Common myeloid progenitor, CD34-positive (primary cell): ENCODE measurements at regions of chr7 and their contacts with region 1.

Region 1: DNA sequence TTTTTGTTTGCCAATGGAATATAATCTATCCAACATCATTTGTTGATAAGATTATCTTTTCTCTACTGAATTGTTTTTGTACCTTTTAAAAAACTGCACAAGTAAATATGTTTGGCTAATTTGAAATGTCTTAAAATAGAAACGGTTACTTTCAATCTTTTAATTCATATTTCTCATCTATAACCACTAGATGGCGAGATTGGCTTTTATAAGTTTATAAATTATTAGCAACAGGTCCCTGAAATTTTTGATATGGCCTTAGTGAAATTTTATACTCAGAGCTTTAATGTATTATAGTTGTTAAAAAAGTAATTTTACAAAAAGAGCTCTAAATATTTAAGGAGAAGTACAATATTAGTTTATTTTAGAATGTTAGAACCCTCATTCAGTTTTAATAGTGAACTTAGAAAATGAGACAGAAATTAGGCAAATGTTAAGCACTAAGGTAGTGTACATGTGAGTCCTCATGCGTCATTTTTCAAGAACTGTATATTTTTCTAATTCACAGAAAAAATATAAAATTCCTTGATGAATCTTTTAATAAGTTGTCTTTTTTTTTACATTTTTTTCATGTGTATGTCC is 592.5 kb downstream of the ARL4A start:
- DNase-seq: peak; percentile 17 to 56 (median 51)
- H3K4me3 ChIP-seq: no peak overlapping the region
- H3K27ac ChIP-seq: no peak overlapping the region
- H3K4me1 ChIP-seq: no peaks in the 10 kb centered on the region
- H3K27me3 ChIP-seq: no peaks in the 10 kb centered on the region

Region 2: DNA sequence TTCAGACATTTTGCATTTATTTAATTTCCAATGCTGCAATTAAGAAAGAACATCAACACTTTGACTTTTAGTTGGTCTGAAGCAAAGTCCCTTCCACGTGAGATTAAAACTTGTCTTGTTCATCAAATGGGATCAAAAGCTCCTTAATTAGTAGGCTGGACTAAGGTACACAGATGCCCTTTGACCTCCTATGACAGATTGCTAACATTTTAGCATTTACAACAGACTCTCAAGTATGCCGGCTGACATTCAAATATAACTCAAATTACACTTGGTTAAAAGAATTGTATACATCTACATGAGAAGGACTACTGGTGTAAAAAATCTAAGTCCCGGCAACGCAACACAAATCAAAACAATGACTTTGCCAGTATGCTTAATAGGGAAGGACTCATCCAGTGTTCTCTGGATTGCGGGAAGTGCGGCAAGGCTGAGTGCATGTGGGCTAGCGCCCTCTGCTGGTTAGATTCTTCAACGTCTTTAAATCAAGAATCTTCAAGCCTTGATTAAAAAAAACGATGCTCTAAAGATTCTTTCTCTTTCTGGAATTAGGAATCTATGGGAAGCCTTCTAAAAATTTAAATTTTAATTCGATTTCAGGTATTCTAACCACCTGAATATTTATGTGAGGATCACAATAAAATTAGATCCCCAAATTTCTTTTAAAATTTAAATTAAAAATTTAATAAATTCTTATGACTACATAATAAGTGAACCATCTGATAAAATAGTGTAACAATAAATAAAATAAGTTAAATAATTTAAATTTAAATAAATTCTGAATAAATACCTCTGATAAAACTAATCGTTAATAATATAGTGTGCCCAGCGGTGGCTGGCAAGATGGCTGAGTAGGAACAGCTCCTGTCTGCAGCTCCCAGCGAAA is 1177.9 kb after region 1 on chr7:
- CTCF ChIA-PET with region 1: interaction called, 10 read pairs
- POLR2A ChIA-PET with region 1: no interaction called
- DNase-seq: peak; percentile 66 to 82 (median 72)
- H3K4me3 ChIP-seq: peak overlapping the region in 1 of 7 experiments; percentile 48
- H3K27ac ChIP-seq: no peak overlapping the region
- H3K4me1 ChIP-seq: no peaks in the 10 kb centered on the region
- H3K27me3 ChIP-seq: peaks cover 0 to 1% (median 0%) of the 10 kb centered on the region in 5 experiments

Region 3: DNA sequence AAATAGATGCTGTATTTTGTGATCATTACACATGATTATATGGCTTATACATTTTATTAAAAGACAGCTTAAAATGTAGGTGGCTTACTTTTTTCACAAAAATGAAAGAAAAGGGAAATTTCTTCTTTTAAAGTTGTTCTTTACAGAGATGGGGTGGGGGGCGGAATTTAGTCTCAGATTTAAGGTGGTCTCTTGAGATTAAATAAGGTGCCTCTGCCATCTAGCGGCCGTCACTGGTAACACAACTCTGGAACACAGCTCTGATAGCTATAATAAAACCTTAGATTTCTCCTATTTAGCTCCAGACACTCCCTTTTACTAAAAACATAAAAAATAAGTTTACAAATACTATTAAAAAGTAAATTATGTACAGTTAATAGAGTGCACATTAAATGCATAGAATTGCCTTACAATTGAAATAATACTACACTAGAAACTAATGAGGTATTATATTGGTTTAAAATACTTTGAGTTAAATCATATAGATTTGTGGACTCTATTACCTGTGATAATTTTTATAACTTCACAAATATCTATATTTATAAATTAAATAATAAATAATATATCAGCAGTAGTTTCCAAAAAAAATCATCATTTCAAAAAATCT is 1411.8 kb after region 1 on chr7:
- CTCF ChIA-PET with region 1: interaction called, 84 read pairs
- POLR2A ChIA-PET with region 1: interaction called, 3 read pairs
- DNase-seq: peak; percentile 38 to 60 (median 45)
- H3K4me3 ChIP-seq: no peak overlapping the region
- H3K27ac ChIP-seq: no peak overlapping the region
- H3K4me1 ChIP-seq: peaks cover 0 to 2% (median 0%) of the 10 kb centered on the region in 4 experiments
- H3K27me3 ChIP-seq: no peaks in the 10 kb centered on the region